Endothelial cell of umbilical vein (primary cell): ENCODE measurements at regions of chr2 and their contacts with region 1.

Region 1: DNA sequence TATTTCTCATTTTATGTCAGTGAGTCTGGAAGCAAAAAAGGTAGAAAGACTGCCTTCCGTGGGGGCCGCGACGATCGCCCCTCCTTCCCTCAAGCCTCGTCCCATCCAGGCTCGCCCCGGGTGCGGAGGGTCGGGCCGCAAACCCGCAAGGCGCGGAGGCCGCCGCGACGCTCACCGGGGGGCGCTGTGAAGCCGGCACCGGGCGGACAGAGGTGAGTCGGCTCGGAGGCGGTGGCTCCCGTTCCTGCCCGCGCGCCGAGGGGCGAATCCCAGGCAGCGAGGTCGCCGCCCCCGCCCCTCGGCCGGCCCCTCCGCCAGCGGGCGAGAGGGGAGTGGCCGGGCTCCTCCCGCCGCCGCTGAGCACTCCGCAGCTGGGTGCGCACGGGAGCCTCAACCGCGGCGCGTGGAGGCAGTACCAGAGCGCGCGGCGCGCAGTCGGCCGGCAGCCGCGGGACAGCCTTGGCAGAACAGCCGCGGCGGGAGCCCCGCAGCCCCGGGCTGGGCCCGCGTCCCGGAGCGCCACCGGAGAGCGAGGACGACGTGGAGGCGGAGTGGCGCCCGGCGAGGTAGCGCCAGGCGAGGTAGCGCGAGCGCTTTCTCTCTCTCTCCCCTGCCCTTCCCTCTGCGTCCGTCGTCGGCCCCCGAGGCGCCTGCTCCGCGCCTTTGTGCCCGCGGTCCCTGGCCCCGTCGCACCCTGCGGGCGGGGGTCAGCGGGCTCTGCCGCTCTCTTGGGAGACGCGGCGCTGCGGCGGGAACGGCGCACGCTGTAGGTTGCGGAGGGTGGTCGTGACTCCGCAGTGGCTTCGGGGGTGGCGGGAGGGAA is at the start of gene MYO1B:
- DNase-seq: peak; percentile 68
- H3K4me3 ChIP-seq: peak within 1 kb of the TSS; percentile 56 to 78 (median 78)
- H3K27ac ChIP-seq: peak within 1 kb of the TSS; percentile 85
- H3K4me1 ChIP-seq: peaks cover 21% of the 10 kb centered on the region
- H3K27me3 ChIP-seq: no peaks in the 10 kb centered on the region
- CTCF ChIP-seq: peak; percentile 57
- POLR2A ChIP-seq: peak; percentile 57
- total RNA-seq, gene MYO1B: 51.1 and 55.4 TPM in 2 replicates

Region 2: GRCh38 chr2:190607014-190607597 is 638.2 kb before region 1 on chr2:
- CTCF ChIA-PET with region 1: no interaction called
- POLR2A ChIA-PET with region 1: no interaction called
- dilution Hi-C with region 1: no loop called
- intact Hi-C with region 1: no loop called
- DNase-seq: no peak
- H3K4me3 ChIP-seq: no peak overlapping the region
- H3K27ac ChIP-seq: no peak overlapping the region
- H3K4me1 ChIP-seq: no peaks in the 10 kb centered on the region
- H3K27me3 ChIP-seq: no peaks in the 10 kb centered on the region
- CTCF ChIP-seq: no peak
- POLR2A ChIP-seq: no peak

Region 3: DNA sequence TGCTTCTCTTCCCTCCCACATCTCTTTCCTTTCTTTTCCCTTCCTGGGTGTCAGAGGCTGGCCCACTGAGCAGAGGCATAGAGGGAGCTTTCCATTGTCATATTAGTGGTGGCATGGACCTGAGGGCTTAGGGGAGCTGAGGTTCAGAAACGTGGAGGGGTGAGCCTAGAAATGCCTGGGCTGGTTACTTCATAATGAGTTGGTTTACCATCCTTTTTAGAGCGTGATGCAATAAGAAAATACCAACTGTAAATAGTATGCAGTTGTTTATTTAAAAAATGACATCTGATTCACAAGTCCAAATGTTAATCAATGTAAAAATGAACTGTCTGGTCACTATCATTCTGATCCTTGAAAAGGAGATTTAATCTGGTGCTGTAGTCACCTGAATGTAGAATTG is 46.2 kb after region 1 on chr2:
- CTCF ChIA-PET with region 1: no interaction called
- POLR2A ChIA-PET with region 1: no interaction called
- dilution Hi-C with region 1: no loop called
- intact Hi-C with region 1: no loop called
- DNase-seq: no peak
- H3K4me3 ChIP-seq: no peak overlapping the region
- H3K27ac ChIP-seq: no peak overlapping the region
- H3K4me1 ChIP-seq: no peaks in the 10 kb centered on the region
- H3K27me3 ChIP-seq: no peaks in the 10 kb centered on the region
- CTCF ChIP-seq: no peak
- POLR2A ChIP-seq: no peak

Region 4: GRCh38 chr2:191321861-191322686 is 76.8 kb after region 1 on chr2:
- CTCF ChIA-PET with region 1: no interaction called
- POLR2A ChIA-PET with region 1: no interaction called
- dilution Hi-C with region 1: no loop called
- intact Hi-C with region 1: loop called (anchors 1 kb)
- DNase-seq: peak; percentile 33
- H3K4me3 ChIP-seq: peak overlapping the region in 1 of 3 experiments; percentile 18
- H3K27ac ChIP-seq: peak overlapping the region; percentile 15
- H3K4me1 ChIP-seq: peaks cover 21% of the 10 kb centered on the region
- H3K27me3 ChIP-seq: no peaks in the 10 kb centered on the region
- CTCF ChIP-seq: no peak
- POLR2A ChIP-seq: no peak